IMR-90 (cell line): ENCODE measurements at regions of chr1 and their contacts with region 1.

Region 1: GRCh38 chr1:34113887-34114286 is 51.1 kb downstream of the CSMD2 start:
- DNase-seq: no peak
- ATAC-seq: no peak
- H3K4me3 ChIP-seq: no peak overlapping the region
- H3K27ac ChIP-seq: no peak overlapping the region
- H3K4me1 ChIP-seq: no peaks in the 10 kb centered on the region
- H3K27me3 ChIP-seq: no peaks in the 10 kb centered on the region
- CTCF ChIP-seq: no peak
- POLR2A ChIP-seq: no peak
- RAD21 ChIP-seq: no peak

Region 2: GRCh38 chr1:34162852-34163766 is 49.2 kb after region 1 on chr1:
- CTCF ChIA-PET with region 1: no interaction called
- POLR2A ChIA-PET with region 1: no interaction called
- dilution Hi-C with region 1: no loop called
- in situ Hi-C with region 1: no loop called
- intact Hi-C with region 1: loop called (anchors 1 kb)
- DNase-seq: peak; percentile 74
- ATAC-seq: peak; percentile 88
- H3K4me3 ChIP-seq: peak overlapping the region; percentile 19; the same call in 1 of the 2 replicates
- H3K27ac ChIP-seq: no peak overlapping the region
- H3K4me1 ChIP-seq: no peaks in the 10 kb centered on the region; the same call in 1 of the 2 replicates
- H3K27me3 ChIP-seq: peaks cover 15% of the 10 kb centered on the region
- CTCF ChIP-seq: peak; percentile 59
- POLR2A ChIP-seq: no peak
- RAD21 ChIP-seq: peak; percentile 68

Region 3: GRCh38 chr1:34597877-34598514 is 484.1 kb after region 1 on chr1:
- CTCF ChIA-PET with region 1: no interaction called
- POLR2A ChIA-PET with region 1: no interaction called
- dilution Hi-C with region 1: no loop called
- in situ Hi-C with region 1: no loop called
- intact Hi-C with region 1: loop called (anchors 5 kb)
- DNase-seq: peak; percentile 6
- ATAC-seq: peak; percentile 68
- H3K4me3 ChIP-seq: no peak overlapping the region
- H3K27ac ChIP-seq: no peak overlapping the region
- H3K4me1 ChIP-seq: no peaks in the 10 kb centered on the region
- H3K27me3 ChIP-seq: no peaks in the 10 kb centered on the region
- CTCF ChIP-seq: peak; percentile 41
- POLR2A ChIP-seq: no peak
- RAD21 ChIP-seq: peak; percentile 55